Testis (tissue), 5 donors: ENCODE measurements at regions of chr15 and their contacts with region 1.

Region 1: GRCh38 chr15:57866149-57866736 is 159.7 kb downstream of the POLR2M start:
- DNase-seq: peak; percentile 78
- H3K4me3 ChIP-seq: no peak overlapping the region
- H3K27ac ChIP-seq: no peak overlapping the region
- H3K4me1 ChIP-seq: no peaks in the 10 kb centered on the region
- H3K27me3 ChIP-seq: no peaks in the 10 kb centered on the region
- CTCF ChIP-seq: peak; percentile 27 to 50 (median 29)
- POLR2A ChIP-seq: no peak

Region 2: GRCh38 chr15:57559875-57560274 is 306.4 kb before region 1 on chr15:
- intact Hi-C with region 1: loop called (anchors 10 kb)
- DNase-seq: peak; percentile 78
- H3K4me3 ChIP-seq: no peak overlapping the region
- H3K27ac ChIP-seq: no peak overlapping the region
- H3K4me1 ChIP-seq: peaks cover 8% of the 10 kb centered on the region
- H3K27me3 ChIP-seq: no peaks in the 10 kb centered on the region
- CTCF ChIP-seq: peak; percentile 58 to 85 (median 73)
- POLR2A ChIP-seq: no peak